ENCODE measurements at regions of chr2 and their contacts with region 1.

Region 1: DNA sequence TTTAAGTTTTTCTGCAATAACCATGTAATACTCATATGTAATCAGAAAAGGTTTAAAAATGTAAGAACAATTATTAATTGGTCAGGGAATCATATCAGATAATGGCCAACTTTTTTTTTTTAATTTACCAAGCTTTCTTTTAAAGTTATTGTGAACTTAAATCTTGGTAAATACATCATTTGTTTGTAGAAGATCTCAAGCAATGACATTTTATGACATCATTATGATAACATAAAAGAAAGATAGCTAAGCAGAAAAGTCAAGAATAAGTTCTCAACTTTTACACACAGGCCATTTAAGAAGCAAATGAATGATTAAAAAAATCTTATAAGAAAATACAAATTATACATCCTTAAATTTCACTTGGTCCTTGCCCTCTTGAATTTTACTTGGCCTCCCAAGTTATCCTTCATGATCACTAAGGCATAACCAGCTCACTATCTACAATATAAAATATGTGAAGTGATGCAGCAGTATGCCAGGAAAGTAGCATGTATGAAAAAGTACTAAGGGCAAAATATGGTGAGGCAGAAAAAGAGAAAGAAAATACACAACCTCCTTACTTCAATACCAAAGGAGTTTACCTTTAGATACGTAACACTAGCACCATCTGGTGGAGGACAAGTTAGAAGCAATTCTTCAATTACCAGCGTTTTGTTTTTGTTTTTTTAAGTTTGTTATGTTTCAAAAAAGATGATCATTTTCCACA is 116.6 kb downstream of the SRBD1 start:
- DNase-seq: peak; percentile 75

Region 2: GRCh38 chr2:44869761-44870160 is 624.7 kb before region 1 on chr2:
- in situ Hi-C with region 1: loop called (anchors 25 kb)
- DNase-seq: no peak

Region 3: DNA sequence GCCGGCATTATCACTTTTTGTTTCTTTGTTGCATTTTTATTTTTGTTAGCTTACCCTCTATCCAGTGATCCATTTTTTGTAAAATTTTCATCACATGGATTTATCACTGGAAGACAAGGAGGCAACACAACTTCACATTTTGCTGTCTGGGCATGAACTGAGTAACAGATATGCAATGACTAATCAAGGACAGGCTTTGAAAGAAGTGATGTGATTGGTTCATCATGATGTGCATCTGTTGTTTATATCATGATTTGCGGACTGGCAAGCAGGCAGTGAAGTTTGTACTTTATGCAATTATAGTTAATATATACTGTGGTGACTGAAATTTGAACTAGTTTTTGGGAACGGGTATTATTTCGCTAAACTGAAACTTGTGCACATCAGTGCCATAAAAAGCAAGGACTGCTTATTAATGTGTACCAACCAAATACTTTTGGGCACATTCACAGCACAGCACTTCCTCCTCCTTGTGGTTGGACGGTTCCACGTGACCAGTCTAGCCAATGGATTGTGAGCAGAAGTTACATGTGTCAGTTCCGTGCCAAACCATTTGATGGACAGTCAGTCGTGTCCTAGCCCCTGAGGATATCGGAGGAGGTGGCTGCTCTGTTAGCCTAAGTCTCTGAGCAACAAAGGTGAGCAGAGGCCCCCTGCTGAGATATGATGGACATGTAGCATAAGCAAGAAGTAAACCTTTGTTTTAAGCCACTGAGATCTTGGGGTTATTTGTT is 283.8 kb before region 1 on chr2:
- in situ Hi-C with region 1: no loop called
- DNase-seq: peak; percentile 19

Region 4: GRCh38 chr2:45578056-45578809 is 83.8 kb after region 1 on chr2:
- in situ Hi-C with region 1: no loop called
- DNase-seq: peak; percentile 80

Region 5: DNA sequence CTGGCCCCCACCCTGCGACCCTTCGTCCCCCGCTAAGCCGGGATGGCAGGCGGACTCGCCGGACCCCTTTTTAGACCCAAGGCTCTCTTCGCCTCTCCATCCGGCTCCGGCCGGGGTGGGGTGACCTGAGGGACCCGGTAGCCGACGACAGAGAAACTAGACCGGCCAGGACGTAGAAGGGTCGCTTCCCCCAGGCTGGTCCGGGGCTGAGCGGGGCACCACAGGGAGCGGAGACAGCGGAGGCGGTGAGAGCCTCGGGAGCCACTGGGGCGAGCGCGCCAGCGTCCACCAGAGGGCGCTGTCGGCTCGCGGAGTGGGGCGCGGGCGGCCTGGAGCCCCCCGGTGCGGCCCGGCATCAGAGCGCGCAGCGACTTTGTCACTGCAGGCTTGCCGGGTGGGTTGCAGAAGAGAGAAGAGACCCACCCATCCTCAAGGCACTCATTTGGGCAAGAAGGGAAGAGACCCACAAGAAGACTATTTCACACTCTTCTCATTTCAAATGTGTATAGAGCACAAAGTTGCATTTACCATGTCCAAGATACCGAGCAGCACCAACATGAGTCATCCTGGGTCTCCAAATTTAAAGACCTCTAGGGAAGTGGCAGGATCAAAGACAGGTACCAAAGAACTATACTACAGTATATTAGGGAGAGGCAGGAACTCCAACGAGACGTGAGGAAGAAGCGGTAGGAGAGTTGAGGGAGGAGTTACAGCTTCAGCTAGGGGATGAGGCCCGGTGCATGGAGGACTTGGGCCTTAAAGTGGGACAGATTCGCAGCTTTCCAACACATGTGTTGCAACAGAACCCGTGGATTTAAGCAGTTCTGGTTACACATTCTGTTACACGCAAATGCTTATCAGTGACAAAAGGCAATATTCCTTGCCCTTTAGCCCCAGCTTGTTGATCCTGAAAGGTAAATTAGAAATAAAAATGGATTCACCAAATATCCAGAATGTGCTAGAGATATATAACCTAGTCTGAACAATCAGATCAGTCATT is 149.4 kb after region 1 on chr2:
- in situ Hi-C with region 1: no loop called
- DNase-seq: peak; percentile 73